GM12878 (cell line): ENCODE measurements at regions of chr16 and their contacts with region 1.

Region 1: DNA sequence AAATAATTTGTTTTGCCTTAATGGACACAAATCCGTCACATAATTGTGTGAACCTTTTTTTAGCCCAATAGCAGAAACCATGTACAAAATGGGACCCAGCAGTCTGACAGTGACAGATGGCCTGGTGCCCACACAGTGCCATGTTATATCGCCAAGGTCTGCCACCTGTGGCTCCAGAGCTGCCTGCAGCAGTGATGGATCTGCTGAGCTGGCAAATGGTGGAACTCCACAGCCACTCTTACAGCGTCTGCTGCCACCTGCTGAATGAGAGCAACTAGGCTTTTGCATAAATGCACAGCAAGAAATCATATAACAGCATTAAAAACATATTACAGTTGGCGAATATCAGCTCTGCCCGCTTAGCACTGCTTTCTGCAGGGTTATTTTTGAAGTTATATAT is 59.4 kb downstream of the NUP93 start:
- DNase-seq: no peak
- ATAC-seq: peak; percentile 69
- H3K4me3 ChIP-seq: no peak overlapping the region
- H3K27ac ChIP-seq: no peak overlapping the region
- H3K4me1 ChIP-seq: no peaks in the 10 kb centered on the region
- H3K27me3 ChIP-seq: no peaks in the 10 kb centered on the region
- CTCF ChIP-seq: peak; percentile 28 to 51 (median 31); a peak in 3 of 6 replicates
- EP300 ChIP-seq: no peak
- POLR2A ChIP-seq: no peak
- RAD21 ChIP-seq: peak; percentile 53

Region 2: GRCh38 chr16:56576585-56577293 is 212.6 kb before region 1 on chr16:
- CTCF ChIA-PET with region 1: interaction called, 4 read pairs
- POLR2A ChIA-PET with region 1: no interaction called
- RAD21 ChIA-PET with region 1: no interaction called
- SMC1A ChIA-PET with region 1: interaction called, 3 read pairs
- in situ Hi-C with region 1: no loop called
- intact Hi-C with region 1: loop called (anchors 2 kb)
- DNase-seq: peak; percentile 32
- ATAC-seq: peak; percentile 100
- H3K4me3 ChIP-seq: no peak overlapping the region
- H3K27ac ChIP-seq: no peak overlapping the region
- H3K4me1 ChIP-seq: no peaks in the 10 kb centered on the region
- H3K27me3 ChIP-seq: no peaks in the 10 kb centered on the region
- CTCF ChIP-seq: peak; percentile 89 to 96 (median 95)
- EP300 ChIP-seq: no peak
- POLR2A ChIP-seq: no peak
- RAD21 ChIP-seq: peak; percentile 95

Region 3: DNA sequence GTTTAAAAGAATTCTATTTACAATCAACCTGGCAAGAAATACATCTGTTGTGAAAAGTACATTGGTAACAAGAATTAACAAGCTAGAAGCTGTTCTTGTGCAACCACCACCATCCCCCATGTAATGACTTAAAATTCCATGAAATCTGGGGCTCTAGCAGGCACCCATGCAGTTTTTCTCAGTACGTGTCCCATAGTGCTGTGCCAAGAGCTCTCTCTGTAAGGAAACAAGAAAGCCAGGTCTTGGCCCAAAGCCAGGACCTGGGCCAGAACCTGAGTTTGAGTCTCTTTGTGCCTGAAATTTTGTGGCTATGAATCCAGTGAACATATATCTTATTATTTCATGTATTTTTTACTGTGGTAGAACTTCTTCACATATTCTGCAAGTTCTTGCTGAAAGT is 12.8 kb before region 1 on chr16:
- CTCF ChIA-PET with region 1: interaction called, 9 read pairs
- POLR2A ChIA-PET with region 1: interaction called, 4 read pairs
- RAD21 ChIA-PET with region 1: no interaction called
- SMC1A ChIA-PET with region 1: interaction called, 10 read pairs
- in situ Hi-C with region 1: no loop called
- intact Hi-C with region 1: no loop called
- DNase-seq: no peak
- ATAC-seq: no peak
- H3K4me3 ChIP-seq: no peak overlapping the region
- H3K27ac ChIP-seq: no peak overlapping the region
- H3K4me1 ChIP-seq: peaks cover 6% of the 10 kb centered on the region
- H3K27me3 ChIP-seq: no peaks in the 10 kb centered on the region
- CTCF ChIP-seq: no peak
- EP300 ChIP-seq: no peak
- POLR2A ChIP-seq: no peak
- RAD21 ChIP-seq: no peak

Region 4: DNA sequence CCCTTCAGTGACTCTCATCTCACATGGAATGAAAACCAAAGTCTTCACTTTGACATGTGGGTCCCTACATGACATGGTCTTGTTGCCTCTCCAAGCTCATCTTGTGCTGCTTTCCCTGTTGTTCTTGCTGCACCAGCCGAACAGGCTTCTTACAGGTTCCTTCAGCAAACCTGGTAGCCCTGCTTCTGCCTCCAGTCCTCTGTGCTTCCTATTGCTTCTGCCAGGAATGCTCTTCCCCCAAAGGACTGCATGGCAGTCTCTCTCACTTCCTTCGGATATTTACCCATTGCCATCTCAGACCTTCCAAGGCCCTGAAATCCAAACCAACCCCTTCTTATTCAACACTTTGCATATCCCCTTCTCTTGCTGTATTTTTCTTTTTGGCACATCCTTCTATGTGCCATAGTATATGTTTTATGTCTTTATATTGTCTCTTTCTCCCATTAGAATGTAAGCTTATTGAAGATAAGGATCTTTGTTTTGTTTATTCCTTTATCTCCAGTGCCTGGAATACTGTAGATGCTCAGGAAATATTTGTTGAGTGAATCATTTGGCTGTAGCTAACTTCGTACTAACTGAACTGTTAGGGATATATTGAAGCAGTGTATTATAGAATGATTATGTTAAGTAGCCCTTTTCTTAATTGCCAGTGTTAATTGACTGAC is 17.8 kb after region 1 on chr16:
- CTCF ChIA-PET with region 1: interaction called, 3 read pairs
- POLR2A ChIA-PET with region 1: no interaction called
- RAD21 ChIA-PET with region 1: no interaction called
- SMC1A ChIA-PET with region 1: interaction called, 5 read pairs
- in situ Hi-C with region 1: no loop called
- intact Hi-C with region 1: loop called (anchors 1 kb)
- DNase-seq: no peak
- ATAC-seq: no peak
- H3K4me3 ChIP-seq: no peak overlapping the region
- H3K27ac ChIP-seq: no peak overlapping the region
- H3K4me1 ChIP-seq: no peaks in the 10 kb centered on the region
- H3K27me3 ChIP-seq: no peaks in the 10 kb centered on the region
- CTCF ChIP-seq: no peak
- EP300 ChIP-seq: no peak
- POLR2A ChIP-seq: no peak
- RAD21 ChIP-seq: no peak

Region 5: DNA sequence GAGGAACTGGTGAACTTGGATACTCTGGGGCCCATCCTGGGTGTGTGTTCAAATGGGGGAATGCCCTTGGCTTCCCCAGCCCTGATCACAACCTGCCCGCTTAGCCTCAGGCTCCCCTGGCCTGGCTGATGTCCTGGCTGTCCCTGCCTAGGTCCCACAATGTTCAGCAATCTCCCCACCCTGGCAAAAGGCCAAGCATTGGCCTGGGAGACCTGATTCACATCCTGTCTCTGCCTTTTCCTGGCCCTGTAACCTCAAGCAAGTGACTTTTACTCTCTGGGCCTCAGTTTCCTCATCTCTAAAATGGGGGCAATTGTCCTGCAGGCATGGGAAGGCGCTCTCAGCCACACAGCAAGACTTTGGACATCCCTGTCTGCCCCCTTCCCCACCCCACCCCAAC is 317.4 kb after region 1 on chr16:
- CTCF ChIA-PET with region 1: no interaction called
- POLR2A ChIA-PET with region 1: no interaction called
- RAD21 ChIA-PET with region 1: no interaction called
- SMC1A ChIA-PET with region 1: no interaction called
- in situ Hi-C with region 1: no loop called
- intact Hi-C with region 1: no loop called
- DNase-seq: no peak
- ATAC-seq: peak; percentile 15; the same call in 2 of the 3 replicates
- H3K4me3 ChIP-seq: no peak overlapping the region
- H3K27ac ChIP-seq: no peak overlapping the region
- H3K4me1 ChIP-seq: peaks cover 12% of the 10 kb centered on the region
- H3K27me3 ChIP-seq: no peaks in the 10 kb centered on the region
- CTCF ChIP-seq: no peak
- EP300 ChIP-seq: no peak
- POLR2A ChIP-seq: no peak
- RAD21 ChIP-seq: no peak

Region 6: GRCh38 chr16:57358527-57359095 is 569.3 kb after region 1 on chr16 and contains the start of gene CCL22:
- CTCF ChIA-PET with region 1: no interaction called
- POLR2A ChIA-PET with region 1: no interaction called
- RAD21 ChIA-PET with region 1: no interaction called
- SMC1A ChIA-PET with region 1: no interaction called
- in situ Hi-C with region 1: no loop called
- intact Hi-C with region 1: no loop called
- DNase-seq: peak; percentile 45
- ATAC-seq: peak; percentile 71
- H3K4me3 ChIP-seq: peak within 1 kb of the TSS; percentile 37; the same call in 1 of the 2 replicates
- H3K27ac ChIP-seq: peak within 1 kb of the TSS; percentile 30
- H3K4me1 ChIP-seq: peaks cover 23% of the 10 kb centered on the region
- H3K27me3 ChIP-seq: no peaks in the 10 kb centered on the region
- CTCF ChIP-seq: no peak
- EP300 ChIP-seq: no peak; a peak in 1 of 4 replicates
- POLR2A ChIP-seq: peak; percentile 89
- RAD21 ChIP-seq: no peak
- polyA plus RNA-seq, gene CCL22: 581 to 591 TPM